Colonic mucosa (tissue), 4 donors: ENCODE measurements at regions of chr9 and their contacts with region 1.

Region 1: GRCh38 chr9:35882263-35882848 is 12.2 kb upstream of the OR13J1 start:
- DNase-seq: peak; percentile 92
- H3K4me3 ChIP-seq: no peak overlapping the region
- H3K27ac ChIP-seq: no peak overlapping the region
- H3K4me1 ChIP-seq: no peaks in the 10 kb centered on the region
- H3K27me3 ChIP-seq: no peaks in the 10 kb centered on the region
- CTCF ChIP-seq: peak; percentile 96

Region 2: GRCh38 chr9:35790385-35791296 is 91.7 kb before region 1 on chr9:
- intact Hi-C with region 1: loop called (anchors 5 kb)
- DNase-seq: peak; percentile 76
- H3K4me3 ChIP-seq: no peak overlapping the region
- H3K27ac ChIP-seq: no peak overlapping the region
- H3K4me1 ChIP-seq: no peaks in the 10 kb centered on the region
- H3K27me3 ChIP-seq: no peaks in the 10 kb centered on the region
- CTCF ChIP-seq: peak; percentile 72

Region 3: DNA sequence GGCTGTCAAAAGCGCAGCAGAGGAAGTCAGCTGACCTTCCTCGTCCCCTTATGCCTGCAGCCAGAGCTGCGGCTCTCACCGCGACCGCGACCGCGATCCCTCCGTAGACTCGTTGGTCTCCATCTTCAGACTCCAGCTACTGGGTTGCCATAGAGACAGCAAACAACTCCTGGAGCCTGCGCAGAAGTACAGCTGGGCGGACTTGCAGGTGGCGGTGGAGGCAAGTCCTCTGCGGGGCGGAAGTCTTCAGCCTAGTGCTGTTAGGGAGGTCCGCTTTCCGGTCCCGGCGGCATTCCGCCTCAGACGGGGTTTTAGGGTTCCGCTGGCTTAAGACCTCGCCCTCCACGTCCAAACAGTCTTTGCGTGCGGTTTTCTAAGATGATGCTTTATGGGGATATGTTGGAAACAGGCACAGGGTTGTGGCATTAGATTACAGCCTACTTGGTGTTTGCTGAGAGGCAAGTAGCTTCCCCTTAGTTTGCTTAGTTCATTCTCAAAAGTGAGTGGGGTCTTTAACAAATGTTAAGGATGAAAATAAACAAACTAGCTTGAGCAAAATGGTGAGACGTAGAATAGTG is 70.2 kb before region 1 on chr9 and contains the start of gene SPAG8:
- intact Hi-C with region 1: no loop called
- DNase-seq: peak; percentile 95
- H3K4me3 ChIP-seq: peak within 1 kb of the TSS; percentile 34
- H3K27ac ChIP-seq: peak within 1 kb of the TSS; percentile 64
- H3K4me1 ChIP-seq: peaks cover 14% of the 10 kb centered on the region
- H3K27me3 ChIP-seq: no peaks in the 10 kb centered on the region
- CTCF ChIP-seq: no peak
- total RNA-seq, gene SPAG8: 0.58 to 0.82 TPM

Region 4: DNA sequence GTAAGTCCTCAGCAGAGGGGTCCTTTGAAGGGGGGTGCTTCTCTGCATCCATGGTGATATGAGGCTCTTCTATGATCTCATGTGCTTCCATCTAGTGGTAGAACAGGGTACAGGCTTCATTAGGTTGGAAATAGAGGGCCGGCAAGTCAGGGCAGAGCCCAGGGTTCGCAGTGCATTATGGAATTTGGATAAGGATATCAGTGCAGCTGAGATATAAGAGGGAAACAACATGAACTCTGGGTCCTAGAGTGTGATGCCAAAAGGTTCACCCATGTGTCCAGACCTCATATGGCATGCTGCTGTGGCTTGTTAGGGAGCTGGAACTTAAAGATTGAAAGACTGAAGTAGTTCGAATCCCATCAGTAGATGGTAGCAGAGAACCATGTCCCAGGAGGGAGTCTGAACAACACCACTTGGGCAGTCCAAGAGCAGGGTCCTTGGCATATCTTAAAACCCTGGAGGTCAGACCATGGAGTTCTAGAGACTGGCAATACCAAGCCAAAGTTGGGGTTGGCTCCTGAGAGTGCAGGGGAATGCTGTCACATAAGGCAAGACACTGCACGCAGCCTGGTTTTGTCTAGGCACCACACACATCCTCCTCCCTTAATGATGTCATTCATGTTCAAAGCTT is 56.2 kb before region 1 on chr9:
- intact Hi-C with region 1: loop called (anchors 2 kb)
- DNase-seq: peak; percentile 60
- H3K4me3 ChIP-seq: no peak overlapping the region
- H3K27ac ChIP-seq: no peak overlapping the region
- H3K4me1 ChIP-seq: no peaks in the 10 kb centered on the region
- H3K27me3 ChIP-seq: no peaks in the 10 kb centered on the region
- CTCF ChIP-seq: peak; percentile 85

Region 5: GRCh38 chr9:35844716-35845270 is 37.6 kb before region 1 on chr9:
- intact Hi-C with region 1: no loop called
- DNase-seq: peak; percentile 73
- H3K4me3 ChIP-seq: no peak overlapping the region
- H3K27ac ChIP-seq: peak overlapping the region; percentile 26
- H3K4me1 ChIP-seq: peaks cover 8% of the 10 kb centered on the region
- H3K27me3 ChIP-seq: no peaks in the 10 kb centered on the region
- CTCF ChIP-seq: no peak

Region 6: DNA sequence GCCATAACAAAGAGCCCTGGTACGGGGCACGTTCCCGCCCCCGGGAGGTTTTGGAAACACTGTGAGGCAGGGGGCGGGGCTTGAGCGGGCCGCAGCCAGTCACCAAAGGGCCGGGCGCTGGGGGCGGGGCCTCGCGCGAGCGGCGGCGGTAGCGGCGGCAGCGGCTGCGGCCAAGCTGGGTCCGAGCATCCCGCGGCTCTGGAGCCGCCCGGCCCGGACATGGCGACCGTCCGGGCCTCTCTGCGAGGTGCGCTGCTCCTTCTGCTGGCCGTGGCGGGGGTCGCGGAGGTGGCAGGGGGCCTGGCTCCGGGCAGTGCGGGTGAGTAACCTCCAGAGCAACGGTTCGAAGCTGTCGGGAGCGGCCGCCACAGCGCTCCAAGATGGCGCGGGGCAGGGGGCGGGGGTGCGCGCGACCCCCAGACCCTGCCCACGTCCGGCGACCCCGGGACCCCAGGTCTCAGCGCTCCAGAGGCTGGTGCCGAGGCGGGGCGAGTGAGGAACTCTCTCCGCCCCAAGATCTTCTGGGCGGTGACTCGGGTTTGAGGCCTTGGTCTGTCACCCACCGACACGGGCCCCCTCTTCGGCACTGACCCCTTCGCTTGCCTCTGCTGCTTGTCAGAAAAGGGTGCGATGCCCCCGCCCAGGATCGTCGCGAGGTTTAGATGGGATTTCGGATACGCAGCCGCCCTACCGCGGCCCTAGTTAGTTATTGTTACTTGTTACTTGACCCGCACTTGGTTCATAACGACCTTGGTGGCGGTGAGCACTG is 154.6 kb after region 1 on chr9 and contains the start of gene RECK:
- intact Hi-C with region 1: no loop called
- DNase-seq: peak; percentile 92
- H3K4me3 ChIP-seq: peak within 1 kb of the TSS; percentile 87
- H3K27ac ChIP-seq: peak within 1 kb of the TSS; percentile 45
- H3K4me1 ChIP-seq: no peaks in the 10 kb centered on the region
- H3K27me3 ChIP-seq: no peaks in the 10 kb centered on the region
- CTCF ChIP-seq: no peak
- total RNA-seq, gene RECK: 1.6 to 4.5 TPM

Region 7: DNA sequence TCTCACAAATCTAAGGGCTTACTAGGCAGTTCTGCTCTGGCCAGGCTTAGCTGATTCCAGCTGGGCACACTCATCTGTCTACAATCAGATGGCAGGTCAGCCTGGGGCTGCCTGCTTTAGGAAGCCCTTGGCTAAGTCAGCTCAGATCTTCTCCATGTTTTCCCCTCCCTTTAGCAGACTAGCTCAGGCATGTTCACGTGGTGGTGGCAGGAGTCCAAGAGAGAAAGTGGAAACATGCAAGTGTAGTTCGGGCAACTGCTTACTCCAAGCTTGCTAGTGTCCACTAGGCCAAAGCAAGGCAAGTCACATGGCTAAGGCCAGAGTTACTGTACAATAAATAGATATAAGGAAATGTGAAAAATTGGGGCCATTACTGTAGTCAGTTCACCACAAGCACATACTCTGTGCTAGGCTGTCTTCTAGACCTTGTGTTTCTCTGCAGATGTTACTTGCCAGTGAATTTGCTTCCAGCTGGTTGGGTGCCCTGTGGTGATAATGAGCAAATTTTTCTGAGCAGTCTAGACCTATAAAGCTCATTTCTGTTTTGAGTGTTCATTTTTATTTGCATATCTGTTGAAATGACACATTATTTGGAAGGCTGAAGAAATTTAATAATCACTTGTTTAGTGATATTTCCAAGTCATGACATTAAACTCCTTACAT is 192.6 kb after region 1 on chr9:
- intact Hi-C with region 1: no loop called
- DNase-seq: peak; percentile 83
- H3K4me3 ChIP-seq: no peak overlapping the region
- H3K27ac ChIP-seq: no peak overlapping the region
- H3K4me1 ChIP-seq: peaks cover 11% of the 10 kb centered on the region
- H3K27me3 ChIP-seq: no peaks in the 10 kb centered on the region
- CTCF ChIP-seq: no peak